Mammary epithelial cell (primary cell): ENCODE measurements at regions of chr20 and their contacts with region 1.

Region 1: GRCh38 chr20:6185268-6185667 is 62.4 kb upstream of the FERMT1 start:
- DNase-seq: no peak
- H3K4me3 ChIP-seq: no peak overlapping the region
- H3K27ac ChIP-seq: no peak overlapping the region
- H3K4me1 ChIP-seq: no peaks in the 10 kb centered on the region
- H3K27me3 ChIP-seq: peaks cover 6% of the 10 kb centered on the region
- CTCF ChIP-seq: peak in 1 of 2 donors; percentile 35

Region 2: DNA sequence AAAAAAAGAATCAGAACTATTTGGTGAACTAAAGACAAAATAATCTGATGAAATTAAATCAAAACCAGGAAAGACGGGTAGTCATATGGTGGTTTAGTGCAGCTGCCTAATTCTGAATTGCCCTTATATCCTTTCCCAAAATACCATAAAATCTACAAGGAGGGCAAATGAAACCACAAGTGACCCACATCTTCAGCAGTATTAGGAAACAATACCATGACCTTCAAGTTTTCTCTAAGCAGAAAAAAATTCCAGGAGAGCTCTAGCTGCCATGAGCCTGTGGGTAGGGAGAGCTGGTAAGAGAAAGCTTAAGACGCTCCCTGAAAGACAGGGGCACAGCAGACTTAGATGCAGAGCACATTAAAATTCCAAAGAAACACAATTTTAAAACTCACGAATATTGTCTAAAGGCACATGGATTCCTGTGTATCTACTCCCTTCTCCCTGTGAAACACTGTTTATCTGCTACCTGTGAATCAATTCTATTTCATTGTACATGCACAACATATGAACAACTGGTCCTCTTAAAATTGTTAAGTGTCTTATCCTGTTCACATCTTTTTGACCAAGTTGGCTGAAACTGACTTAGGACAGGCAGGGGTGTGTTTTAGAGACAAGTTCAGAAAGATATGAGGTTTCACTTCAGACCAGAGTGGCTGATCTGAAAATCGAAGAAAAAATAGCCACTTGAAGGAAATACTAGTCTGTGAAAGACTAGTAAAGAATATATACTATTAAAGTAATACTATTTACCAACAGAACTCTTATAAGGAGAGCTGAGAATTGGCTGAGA is 588.7 kb before region 1 on chr20:
- CTCF ChIA-PET with region 1: no interaction called
- dilution Hi-C with region 1: no loop called
- in situ Hi-C with region 1: no loop called
- intact Hi-C with region 1: no loop called
- DNase-seq: no peak
- H3K4me3 ChIP-seq: no peak overlapping the region
- H3K27ac ChIP-seq: no peak overlapping the region
- H3K4me1 ChIP-seq: no peaks in the 10 kb centered on the region
- H3K27me3 ChIP-seq: no peaks in the 10 kb centered on the region
- CTCF ChIP-seq: no peak

Region 3: DNA sequence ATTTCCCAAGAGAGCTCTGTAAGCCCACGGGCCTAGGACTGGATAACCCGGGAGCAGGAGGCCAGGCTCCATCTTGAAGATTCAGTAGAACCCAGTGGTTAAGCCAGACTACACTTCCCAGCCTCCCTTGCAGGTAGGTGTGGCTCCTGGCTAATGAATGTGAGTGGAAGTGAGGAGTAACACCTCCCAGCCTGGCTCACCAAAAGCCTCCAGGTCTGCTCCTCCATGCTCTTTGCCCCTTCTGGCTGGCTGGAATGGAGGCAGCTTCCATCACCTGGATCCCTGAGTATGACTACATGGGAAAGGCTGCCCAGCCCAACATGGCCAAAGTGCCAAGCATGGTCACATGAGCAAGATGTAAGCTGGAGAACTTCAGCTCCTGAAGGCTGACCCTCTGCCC is 141.2 kb before region 1 on chr20:
- CTCF ChIA-PET with region 1: no interaction called
- dilution Hi-C with region 1: no loop called
- in situ Hi-C with region 1: no loop called
- intact Hi-C with region 1: no loop called
- DNase-seq: no peak
- H3K4me3 ChIP-seq: no peak overlapping the region
- H3K27ac ChIP-seq: no peak overlapping the region
- H3K4me1 ChIP-seq: no peaks in the 10 kb centered on the region
- H3K27me3 ChIP-seq: no peaks in the 10 kb centered on the region
- CTCF ChIP-seq: no peak

Region 4: GRCh38 chr20:6228302-6228843 is 43.1 kb after region 1 on chr20:
- CTCF ChIA-PET with region 1: no interaction called
- dilution Hi-C with region 1: loop called (anchors 5 kb)
- in situ Hi-C with region 1: no loop called
- intact Hi-C with region 1: no loop called
- DNase-seq: no peak
- H3K4me3 ChIP-seq: no peak overlapping the region
- H3K27ac ChIP-seq: no peak overlapping the region
- H3K4me1 ChIP-seq: no peaks in the 10 kb centered on the region
- H3K27me3 ChIP-seq: peaks cover 2% of the 10 kb centered on the region
- CTCF ChIP-seq: no peak

Region 5: DNA sequence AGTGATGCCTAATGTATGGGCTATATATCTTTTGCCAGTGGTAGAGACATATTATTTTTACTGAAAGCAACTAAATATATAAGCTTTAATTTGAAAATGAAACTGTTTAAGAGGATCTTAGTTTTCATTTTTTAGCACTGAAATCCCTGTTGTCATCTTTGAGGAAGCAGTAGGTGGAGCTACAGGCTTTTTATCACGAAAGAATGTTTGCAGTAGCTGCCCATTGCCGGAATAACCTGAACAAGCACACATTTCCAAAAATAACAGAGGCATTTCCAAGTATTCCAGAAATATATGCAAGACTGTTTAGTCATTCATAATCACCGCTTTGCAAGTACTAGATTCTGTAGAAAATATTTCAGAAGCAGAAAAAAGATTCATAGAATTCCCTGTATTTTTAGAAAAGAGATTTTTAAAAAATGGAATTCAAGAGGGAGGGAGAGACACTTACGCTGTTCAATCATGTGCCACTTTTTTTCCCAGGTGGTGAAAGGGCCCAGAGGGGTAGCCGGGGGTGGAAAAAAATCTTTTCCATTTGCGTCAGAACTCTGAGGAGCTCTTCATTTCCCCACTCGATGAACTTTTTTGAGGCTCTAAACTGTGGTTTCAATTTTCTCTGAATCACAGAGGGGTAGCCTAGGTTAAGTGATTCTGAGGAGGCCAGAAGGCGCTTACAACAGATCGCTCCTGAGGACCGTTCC is 80.1 kb after region 1 on chr20:
- CTCF ChIA-PET with region 1: no interaction called
- dilution Hi-C with region 1: no loop called
- in situ Hi-C with region 1: no loop called
- intact Hi-C with region 1: no loop called
- DNase-seq: peak; percentile 41
- H3K4me3 ChIP-seq: peak overlapping the region in 2 of 3 experiments; percentile 17 to 35
- H3K27ac ChIP-seq: peak overlapping the region; percentile 10
- H3K4me1 ChIP-seq: peaks cover 9% of the 10 kb centered on the region
- H3K27me3 ChIP-seq: no peaks in the 10 kb centered on the region
- CTCF ChIP-seq: peak; percentile 65 to 70